ENCODE measurements at regions of chr11 and their contacts with region 1.

Region 1: GRCh38 chr11:121655537-121656327 is 203.0 kb upstream of the SORL1-AS1 start:
- DNase-seq: peak; percentile 82 to 92 (median 90)
- H3K4me3 ChIP-seq: peak overlapping the region; percentile 39 to 80 (median 61)
- H3K27ac ChIP-seq: peak overlapping the region; percentile 85 to 99 (median 97)
- H3K27me3 ChIP-seq: no peaks in the 10 kb centered on the region
- CTCF ChIP-seq: peak; percentile 69 to 95 (median 82)

Region 2: DNA sequence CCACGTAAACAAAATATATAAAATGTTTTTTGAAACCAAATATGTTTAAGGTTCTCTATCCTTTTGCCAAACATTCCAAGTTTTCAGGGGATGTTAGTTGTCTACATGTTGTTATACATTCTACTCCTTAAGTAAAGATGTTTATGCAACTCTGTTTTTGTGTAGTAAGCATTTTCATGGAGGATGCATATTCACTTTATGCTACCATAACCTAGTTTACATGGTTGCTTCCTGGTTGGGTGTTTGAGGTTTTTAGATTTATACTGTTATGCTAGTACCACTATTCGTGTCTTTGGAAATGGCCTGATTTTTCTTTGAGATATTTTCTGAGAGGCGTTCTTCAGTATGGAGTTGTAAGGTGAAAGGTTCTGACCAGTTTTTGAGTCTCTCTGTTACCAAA is 71.9 kb before region 1 on chr11:
- intact Hi-C with region 1: no loop called
- DNase-seq: no peak
- H3K4me3 ChIP-seq: no peak overlapping the region
- H3K27ac ChIP-seq: peak overlapping the region in 7 of 59 donors; percentile 3 to 70 (median 40)
- H3K27me3 ChIP-seq: no peaks in the 10 kb centered on the region
- CTCF ChIP-seq: no peak

Region 3: GRCh38 chr11:121595717-121596161 is 60.0 kb before region 1 on chr11:
- intact Hi-C with region 1: no loop called
- DNase-seq: peak in 3 of 10 donors; percentile 25 to 49 (median 39)
- H3K4me3 ChIP-seq: no peak overlapping the region
- H3K27ac ChIP-seq: peak overlapping the region in 41 of 59 donors; percentile 1 to 76 (median 46)
- H3K27me3 ChIP-seq: no peaks in the 10 kb centered on the region
- CTCF ChIP-seq: no peak

Region 4: GRCh38 chr11:121696177-121696871 is 40.6 kb after region 1 on chr11:
- intact Hi-C with region 1: loop called (anchors 2 kb)
- DNase-seq: peak; percentile 7 to 75 (median 63)
- H3K4me3 ChIP-seq: peak overlapping the region in 52 of 59 donors; percentile 2 to 58 (median 26)
- H3K27ac ChIP-seq: peak overlapping the region; percentile 83 to 99 (median 95)
- H3K27me3 ChIP-seq: no peaks in the 10 kb centered on the region
- CTCF ChIP-seq: peak in 2 of 56 donors; percentile 6 to 8

Region 5: DNA sequence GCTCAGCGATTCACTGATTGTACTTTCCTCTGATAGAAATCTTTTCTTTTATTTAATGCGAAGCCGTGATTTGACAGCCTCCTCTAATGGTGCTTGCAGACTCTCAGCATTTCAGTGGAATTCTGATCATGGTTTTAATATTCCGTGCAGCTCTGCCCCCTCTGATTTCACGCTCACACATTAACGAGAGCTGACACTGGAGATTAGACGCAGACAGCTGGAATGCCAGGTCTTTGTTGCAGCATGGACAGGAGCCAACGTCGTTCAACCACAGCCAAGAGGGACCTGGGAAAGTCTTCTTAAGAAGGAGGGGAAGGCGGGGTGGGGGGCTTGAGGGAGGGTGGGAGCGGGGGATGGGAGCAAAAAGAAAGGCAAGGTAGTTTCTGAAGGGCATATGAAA is 273.8 kb after region 1 on chr11:
- intact Hi-C with region 1: loop called (anchors 2 to 10 kb)
- DNase-seq: peak in 7 of 10 donors; percentile 31 to 65 (median 46)
- H3K4me3 ChIP-seq: peak overlapping the region; percentile 20 to 74 (median 55)
- H3K27ac ChIP-seq: peak overlapping the region; percentile 1 to 92 (median 79)
- H3K27me3 ChIP-seq: no peaks in the 10 kb centered on the region
- CTCF ChIP-seq: no peak

Region 6: GRCh38 chr11:122101625-122102291 is 446.0 kb after region 1 on chr11:
- intact Hi-C with region 1: loop called (anchors 1 kb)
- DNase-seq: peak; percentile 45 to 90 (median 81)
- H3K4me3 ChIP-seq: peak overlapping the region; percentile 58 to 91 (median 76)
- H3K27ac ChIP-seq: peak overlapping the region; percentile 91 to 99 (median 98)
- H3K27me3 ChIP-seq: no peaks in the 10 kb centered on the region
- CTCF ChIP-seq: peak; percentile 70 to 95 (median 85)

Region 7: DNA sequence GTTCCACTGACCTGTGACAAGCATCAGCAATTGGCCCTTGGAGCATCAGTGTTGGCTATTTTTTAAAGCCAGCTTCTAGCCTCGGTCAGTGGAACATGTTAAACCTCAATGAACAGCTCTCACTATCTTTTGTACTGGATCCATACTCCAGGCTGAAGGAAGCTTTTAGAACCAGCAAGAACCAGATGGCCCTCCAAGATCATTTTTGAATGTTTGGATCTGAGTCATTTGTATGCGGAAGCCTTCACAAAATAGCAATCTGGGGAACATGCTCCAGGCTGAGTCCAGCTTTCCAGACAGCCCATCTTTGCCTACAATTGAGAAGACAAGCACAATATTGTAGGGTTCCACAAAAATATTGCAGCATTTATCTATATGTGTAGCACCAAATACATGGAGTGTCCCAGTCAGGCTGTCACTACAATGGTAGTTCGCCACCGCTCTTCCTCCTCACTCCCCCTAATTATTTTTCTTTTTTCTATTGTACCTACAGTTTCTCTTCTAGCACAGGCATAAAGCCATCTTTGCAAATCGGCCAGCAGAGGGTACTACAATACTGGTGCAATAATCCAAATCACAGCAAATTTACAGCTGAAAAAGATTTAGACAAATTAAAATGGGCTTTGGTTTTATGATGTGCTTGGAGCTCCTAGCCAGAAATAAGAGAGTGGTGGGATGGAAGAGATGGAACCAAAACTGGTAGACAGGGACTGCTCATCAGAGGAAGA is 637.7 kb after region 1 on chr11:
- intact Hi-C with region 1: loop called in 1 of 2 experiments (anchors 5 kb)
- DNase-seq: peak in 1 of 10 donors; percentile 40
- H3K4me3 ChIP-seq: no peak overlapping the region
- H3K27ac ChIP-seq: peak overlapping the region in 48 of 59 donors; percentile 3 to 81 (median 56)
- H3K27me3 ChIP-seq: no peaks in the 10 kb centered on the region
- CTCF ChIP-seq: peak in 53 of 56 donors; percentile 22 to 75 (median 55)

Region 8: DNA sequence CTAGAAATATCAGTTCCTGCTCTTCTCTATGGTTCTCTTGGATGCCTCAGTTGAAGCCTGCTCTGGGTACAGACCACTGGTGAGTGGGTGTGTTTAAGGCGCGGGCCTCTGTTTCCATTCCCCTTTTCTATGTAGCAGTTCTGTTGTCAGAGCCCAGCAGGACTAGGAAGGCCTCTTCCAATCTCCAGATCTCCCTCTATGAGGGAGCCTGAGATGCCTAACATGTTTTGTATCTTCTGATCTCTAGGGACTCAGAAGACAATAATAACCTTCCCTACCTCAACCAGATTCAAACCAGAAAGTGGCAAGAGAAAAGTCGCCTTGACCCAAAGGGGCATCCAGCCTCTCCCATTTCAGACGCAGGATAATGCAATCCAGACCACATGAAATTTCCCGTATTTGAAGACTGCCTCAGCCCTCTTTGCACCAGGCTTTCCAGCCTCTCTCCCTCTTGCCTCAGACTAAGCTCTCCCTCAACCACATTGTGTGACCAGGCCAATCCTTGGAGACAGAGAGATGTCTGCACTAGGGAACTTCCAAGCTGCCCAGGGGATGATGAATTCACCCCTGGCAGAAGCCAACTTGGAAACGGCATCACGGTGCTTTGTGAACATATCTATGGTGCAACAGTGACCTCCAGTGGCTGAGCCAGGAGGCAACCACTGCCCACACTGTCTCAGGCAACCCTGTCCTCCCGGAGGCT is 849.7 kb after region 1 on chr11:
- intact Hi-C with region 1: loop called (anchors 2 kb)
- DNase-seq: peak; percentile 71 to 91 (median 86)
- H3K4me3 ChIP-seq: peak overlapping the region in 2 of 59 donors; percentile 0 to 7
- H3K27ac ChIP-seq: peak overlapping the region in 26 of 59 donors; percentile 6 to 75 (median 52)
- H3K27me3 ChIP-seq: no peaks in the 10 kb centered on the region
- CTCF ChIP-seq: peak; percentile 69 to 98 (median 92)